Psoas muscle (tissue), 8 donors: ENCODE measurements at regions of chr12 and their contacts with region 1.

Region 1: DNA sequence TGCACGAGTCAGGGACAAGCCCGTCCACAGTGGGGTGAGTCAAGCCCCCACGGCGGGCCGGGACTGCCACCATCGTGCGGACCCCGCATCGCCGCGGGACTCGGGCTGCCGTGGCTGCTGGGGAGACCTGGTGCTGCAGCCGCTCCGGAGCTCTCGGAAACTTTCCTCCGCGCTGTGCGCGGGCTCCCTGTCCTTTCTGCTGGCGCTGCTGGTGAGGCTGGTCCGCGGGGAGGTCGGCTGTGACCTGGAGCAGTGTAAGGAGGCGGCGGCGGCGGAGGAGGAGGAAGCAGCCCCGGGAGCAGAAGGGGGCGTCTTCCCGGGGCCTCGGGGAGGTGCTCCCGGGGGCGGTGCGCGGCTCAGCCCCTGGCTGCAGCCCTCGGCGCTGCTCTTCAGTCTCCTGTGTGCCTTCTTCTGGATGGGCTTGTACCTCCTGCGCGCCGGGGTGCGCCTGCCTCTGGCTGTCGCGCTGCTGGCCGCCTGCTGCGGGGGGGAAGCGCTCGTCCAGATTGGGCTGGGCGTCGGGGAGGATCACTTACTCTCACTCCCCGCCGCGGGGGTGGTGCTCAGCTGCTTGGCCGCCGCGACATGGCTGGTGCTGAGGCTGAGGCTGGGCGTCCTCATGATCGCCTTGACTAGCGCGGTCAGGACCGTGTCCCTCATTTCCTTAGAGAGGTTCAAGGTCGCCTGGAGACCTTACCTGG is 1.1 kb downstream of the PDE3A start:
- DNase-seq: peak; percentile 63 to 78
- ATAC-seq: peak; percentile 50 to 76 (median 72)
- H3K4me3 ChIP-seq: peak overlapping the region; percentile 71
- H3K27ac ChIP-seq: peak overlapping the region; percentile 38
- H3K4me1 ChIP-seq: no peaks in the 10 kb centered on the region
- H3K27me3 ChIP-seq: peaks cover 0 to 12% (median 0%) of the 10 kb centered on the region in 3 donors
- CTCF ChIP-seq: peak; percentile 8

Region 2: GRCh38 chr12:20125276-20125798 is 244.1 kb before region 1 on chr12:
- intact Hi-C with region 1: loop called in 1 of 2 experiments (anchors 10 kb)
- DNase-seq: no peak
- ATAC-seq: peak in 1 of 4 donors; percentile 29
- H3K4me3 ChIP-seq: no peak overlapping the region
- H3K27ac ChIP-seq: no peak overlapping the region
- H3K4me1 ChIP-seq: no peaks in the 10 kb centered on the region
- H3K27me3 ChIP-seq: no peaks in the 10 kb centered on the region
- CTCF ChIP-seq: no peak